Caco-2 (cell line): ENCODE measurements at regions of chr3 and their contacts with region 1.

Region 1: GRCh38 chr3:24365194-24365612 is 129.4 kb downstream of the THRB start:
- DNase-seq: peak; percentile 15 to 44
- H3K4me3 ChIP-seq: no peak overlapping the region
- H3K4me3 Mint-ChIP-seq: no peak overlapping the region
- H3K27ac Mint-ChIP-seq: no peak overlapping the region
- H3K4me1 ChIP-seq: peaks cover 48% of the 10 kb centered on the region
- H3K4me1 Mint-ChIP-seq: peaks cover 20% of the 10 kb centered on the region
- H3K27me3 ChIP-seq: no peaks in the 10 kb centered on the region
- H3K27me3 Mint-ChIP-seq: no peaks in the 10 kb centered on the region
- CTCF ChIP-seq: no peak

Region 2: GRCh38 chr3:24336101-24336500 is 29.1 kb before region 1 on chr3:
- CTCF ChIA-PET with region 1: no interaction called
- POLR2A ChIA-PET with region 1: no interaction called
- intact Hi-C with region 1: no loop called
- DNase-seq: no peak
- H3K4me3 ChIP-seq: no peak overlapping the region
- H3K4me3 Mint-ChIP-seq: no peak overlapping the region
- H3K27ac Mint-ChIP-seq: no peak overlapping the region
- H3K4me1 ChIP-seq: no peaks in the 10 kb centered on the region
- H3K4me1 Mint-ChIP-seq: peaks cover 7% of the 10 kb centered on the region
- H3K27me3 ChIP-seq: no peaks in the 10 kb centered on the region
- H3K27me3 Mint-ChIP-seq: no peaks in the 10 kb centered on the region
- CTCF ChIP-seq: no peak

Region 3: GRCh38 chr3:24377218-24377993 is 12.2 kb after region 1 on chr3:
- CTCF ChIA-PET with region 1: no interaction called
- POLR2A ChIA-PET with region 1: no interaction called
- intact Hi-C with region 1: loop called (anchors 1 kb)
- DNase-seq: no peak
- H3K4me3 ChIP-seq: no peak overlapping the region
- H3K4me3 Mint-ChIP-seq: no peak overlapping the region
- H3K27ac Mint-ChIP-seq: no peak overlapping the region
- H3K4me1 ChIP-seq: peaks cover 39% of the 10 kb centered on the region
- H3K4me1 Mint-ChIP-seq: peaks cover 35% of the 10 kb centered on the region
- H3K27me3 ChIP-seq: no peaks in the 10 kb centered on the region
- H3K27me3 Mint-ChIP-seq: no peaks in the 10 kb centered on the region
- CTCF ChIP-seq: no peak

Region 4: DNA sequence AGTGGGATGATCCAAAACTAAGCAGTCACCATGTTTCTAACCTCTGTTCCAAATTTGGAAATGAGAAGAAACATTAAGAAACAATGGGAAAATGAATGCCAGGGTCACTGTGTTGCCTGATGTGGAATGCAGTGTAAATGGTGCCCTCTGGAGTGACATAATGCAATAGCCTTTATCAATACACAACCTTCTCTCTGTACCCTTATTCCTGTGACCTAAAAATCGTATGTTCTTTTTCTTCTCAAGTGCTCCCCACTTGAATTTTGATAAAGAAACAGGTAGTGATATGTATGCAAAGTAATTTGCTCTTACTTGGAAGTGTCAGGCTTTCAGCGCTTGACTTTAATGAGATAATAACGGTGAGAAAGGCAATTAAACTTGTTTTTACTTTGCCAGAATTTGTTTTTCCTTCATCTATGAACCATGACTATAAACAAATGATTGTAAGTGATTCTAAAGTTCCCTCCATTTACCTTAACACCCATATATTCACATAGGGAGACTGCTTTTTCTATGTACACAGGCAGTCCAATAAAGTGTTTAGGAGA is 275.2 kb after region 1 on chr3:
- CTCF ChIA-PET with region 1: no interaction called
- POLR2A ChIA-PET with region 1: no interaction called
- intact Hi-C with region 1: loop called (anchors 10 kb)
- DNase-seq: peak in 1 of 2 experiments; percentile 32
- H3K4me3 ChIP-seq: no peak overlapping the region
- H3K4me3 Mint-ChIP-seq: no peak overlapping the region
- H3K27ac Mint-ChIP-seq: peak overlapping the region; percentile 60
- H3K4me1 ChIP-seq: peaks cover 29% of the 10 kb centered on the region
- H3K4me1 Mint-ChIP-seq: peaks cover 15% of the 10 kb centered on the region
- H3K27me3 ChIP-seq: no peaks in the 10 kb centered on the region
- H3K27me3 Mint-ChIP-seq: no peaks in the 10 kb centered on the region
- CTCF ChIP-seq: peak; percentile 49 to 69